Mammary epithelial cell (primary cell): ENCODE measurements at regions of chr5 and their contacts with region 1.

Region 1: GRCh38 chr5:36357391-36357975 is 55.8 kb upstream of the RANBP3L start:
- DNase-seq: no peak
- H3K4me3 ChIP-seq: no peak overlapping the region
- H3K27ac ChIP-seq: no peak overlapping the region
- H3K4me1 ChIP-seq: peaks cover 6% of the 10 kb centered on the region
- H3K27me3 ChIP-seq: no peaks in the 10 kb centered on the region
- CTCF ChIP-seq: no peak

Region 2: GRCh38 chr5:36125868-36126267 is 231.6 kb before region 1 on chr5:
- CTCF ChIA-PET with region 1: no interaction called
- dilution Hi-C with region 1: no loop called
- in situ Hi-C with region 1: no loop called
- intact Hi-C with region 1: no loop called
- DNase-seq: no peak
- H3K4me3 ChIP-seq: no peak overlapping the region
- H3K27ac ChIP-seq: no peak overlapping the region
- H3K4me1 ChIP-seq: no peaks in the 10 kb centered on the region
- H3K27me3 ChIP-seq: no peaks in the 10 kb centered on the region
- CTCF ChIP-seq: no peak

Region 3: DNA sequence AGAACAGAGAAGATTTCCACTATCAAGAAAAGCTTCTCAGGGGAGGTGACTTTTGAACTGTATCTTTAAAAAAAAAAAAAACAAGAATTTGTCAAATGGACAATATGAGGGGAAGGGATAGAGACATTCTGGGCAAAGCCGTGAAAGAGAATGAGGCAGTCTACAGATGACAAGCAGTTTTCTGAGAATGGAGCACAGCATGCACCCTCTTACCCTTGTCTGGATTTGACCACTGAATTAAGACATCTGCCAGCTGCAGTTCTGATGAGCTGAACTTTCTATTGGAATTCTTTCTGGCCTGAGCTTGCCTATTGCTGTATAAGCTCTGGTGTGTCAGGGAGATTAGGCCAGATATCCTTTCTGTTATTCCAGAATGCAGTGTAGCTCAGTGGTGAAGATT is 45.5 kb before region 1 on chr5:
- CTCF ChIA-PET with region 1: no interaction called
- dilution Hi-C with region 1: loop called (anchors 5 kb)
- in situ Hi-C with region 1: no loop called
- intact Hi-C with region 1: no loop called
- DNase-seq: no peak
- H3K4me3 ChIP-seq: no peak overlapping the region
- H3K27ac ChIP-seq: no peak overlapping the region
- H3K4me1 ChIP-seq: no peaks in the 10 kb centered on the region
- H3K27me3 ChIP-seq: peaks cover 8% of the 10 kb centered on the region
- CTCF ChIP-seq: no peak